Panc1 (cell line): ENCODE measurements at regions of chr16 and their contacts with region 1.

Region 1: GRCh38 chr16:22190776-22191531 is 15.1 kb upstream of the EEF2K start:
- DNase-seq: peak; percentile 99
- ATAC-seq: peak; percentile 84
- H3K4me3 ChIP-seq: peak overlapping the region; percentile 65 to 77
- H3K27ac ChIP-seq: peak overlapping the region; percentile 72
- H3K4me1 ChIP-seq: peaks cover 26% of the 10 kb centered on the region
- H3K27me3 ChIP-seq: no peaks in the 10 kb centered on the region
- CTCF ChIP-seq: no peak

Region 2: GRCh38 chr16:21950782-21951521 is 240.0 kb before region 1 on chr16:
- CTCF ChIA-PET with region 1: interaction called, 15 read pairs
- POLR2A ChIA-PET with region 1: interaction called, 3 read pairs
- in situ Hi-C with region 1: no loop called
- intact Hi-C with region 1: no loop called
- DNase-seq: peak; percentile 12
- ATAC-seq: no peak
- H3K4me3 ChIP-seq: no peak overlapping the region
- H3K27ac ChIP-seq: no peak overlapping the region
- H3K4me1 ChIP-seq: peaks cover 15% of the 10 kb centered on the region
- H3K27me3 ChIP-seq: no peaks in the 10 kb centered on the region
- CTCF ChIP-seq: peak; percentile 79

Region 3: DNA sequence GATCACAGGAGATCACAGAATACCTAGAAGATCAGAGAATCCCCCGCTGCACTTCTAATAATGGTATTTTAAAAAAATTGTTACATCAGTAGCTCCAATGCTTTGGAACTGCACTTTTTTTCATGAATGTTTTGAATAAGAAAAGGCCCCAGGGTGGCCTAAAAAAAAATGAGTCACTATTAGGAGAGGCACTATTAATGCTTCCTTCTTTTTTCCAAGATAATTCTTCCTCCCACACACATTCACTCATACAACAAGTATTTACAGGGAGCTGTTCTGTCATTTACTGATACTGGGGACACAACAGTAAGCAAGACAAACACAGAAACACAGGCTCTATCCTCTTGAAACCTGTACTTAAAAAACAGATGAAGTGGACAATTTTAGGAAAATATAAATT is 189.4 kb before region 1 on chr16:
- CTCF ChIA-PET with region 1: interaction called, 27 read pairs
- POLR2A ChIA-PET with region 1: interaction called, 5 read pairs
- in situ Hi-C with region 1: no loop called
- intact Hi-C with region 1: loop called (anchors 2 kb)
- DNase-seq: no peak
- ATAC-seq: no peak
- H3K4me3 ChIP-seq: peak overlapping the region in 1 of 2 experiments; percentile 41; a peak in 1 of 4 replicates
- H3K27ac ChIP-seq: no peak overlapping the region
- H3K4me1 ChIP-seq: no peaks in the 10 kb centered on the region; the same call in 1 of the 2 replicates
- H3K27me3 ChIP-seq: no peaks in the 10 kb centered on the region
- CTCF ChIP-seq: no peak

Region 4: DNA sequence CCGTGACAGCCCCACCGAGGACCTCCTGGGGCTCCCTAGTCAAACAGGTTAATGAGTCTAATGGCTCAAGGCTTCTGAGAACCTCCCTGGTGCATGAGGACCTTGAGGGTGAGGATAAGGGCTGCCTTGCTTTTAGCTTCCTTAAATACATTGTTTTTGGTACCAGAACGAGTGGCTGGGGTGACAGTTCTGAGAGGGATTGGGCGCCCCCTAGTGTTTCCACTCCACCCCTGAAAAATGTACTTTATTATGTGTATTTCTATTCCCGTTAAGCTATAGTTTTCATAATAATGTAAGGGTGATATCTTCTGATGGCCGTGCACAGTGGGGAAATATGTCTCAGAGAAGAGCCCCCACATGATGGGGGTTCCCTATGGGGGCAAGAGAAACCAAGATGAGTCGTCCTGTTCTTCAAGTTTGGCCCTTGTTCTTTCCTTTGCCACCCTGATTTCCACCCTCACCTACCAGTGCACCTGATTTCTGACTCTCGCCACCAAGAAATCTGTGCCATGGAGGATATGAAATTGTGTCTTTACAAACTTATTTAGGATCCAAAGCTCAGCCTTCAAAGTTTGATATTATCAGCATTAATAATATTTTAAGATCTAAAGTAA is 113.1 kb before region 1 on chr16:
- CTCF ChIA-PET with region 1: interaction called, 12 read pairs
- POLR2A ChIA-PET with region 1: no interaction called
- in situ Hi-C with region 1: loop called (anchors 25 kb)
- intact Hi-C with region 1: no loop called
- DNase-seq: no peak
- ATAC-seq: peak; percentile 85
- H3K4me3 ChIP-seq: no peak overlapping the region
- H3K27ac ChIP-seq: no peak overlapping the region
- H3K4me1 ChIP-seq: peaks cover 11% of the 10 kb centered on the region; the same call in 1 of the 2 replicates
- H3K27me3 ChIP-seq: no peaks in the 10 kb centered on the region
- CTCF ChIP-seq: peak; percentile 92

Region 5: GRCh38 chr16:22147853-22148252 is 43.1 kb before region 1 on chr16:
- CTCF ChIA-PET with region 1: no interaction called
- POLR2A ChIA-PET with region 1: no interaction called
- in situ Hi-C with region 1: no loop called
- intact Hi-C with region 1: no loop called
- DNase-seq: no peak
- ATAC-seq: no peak
- H3K4me3 ChIP-seq: no peak overlapping the region
- H3K27ac ChIP-seq: no peak overlapping the region
- H3K4me1 ChIP-seq: no peaks in the 10 kb centered on the region
- H3K27me3 ChIP-seq: 0 out of 2 replicates have a peak, but pooled peaks cover 3% of the 10 kb centered on the region
- CTCF ChIP-seq: no peak

Region 6: DNA sequence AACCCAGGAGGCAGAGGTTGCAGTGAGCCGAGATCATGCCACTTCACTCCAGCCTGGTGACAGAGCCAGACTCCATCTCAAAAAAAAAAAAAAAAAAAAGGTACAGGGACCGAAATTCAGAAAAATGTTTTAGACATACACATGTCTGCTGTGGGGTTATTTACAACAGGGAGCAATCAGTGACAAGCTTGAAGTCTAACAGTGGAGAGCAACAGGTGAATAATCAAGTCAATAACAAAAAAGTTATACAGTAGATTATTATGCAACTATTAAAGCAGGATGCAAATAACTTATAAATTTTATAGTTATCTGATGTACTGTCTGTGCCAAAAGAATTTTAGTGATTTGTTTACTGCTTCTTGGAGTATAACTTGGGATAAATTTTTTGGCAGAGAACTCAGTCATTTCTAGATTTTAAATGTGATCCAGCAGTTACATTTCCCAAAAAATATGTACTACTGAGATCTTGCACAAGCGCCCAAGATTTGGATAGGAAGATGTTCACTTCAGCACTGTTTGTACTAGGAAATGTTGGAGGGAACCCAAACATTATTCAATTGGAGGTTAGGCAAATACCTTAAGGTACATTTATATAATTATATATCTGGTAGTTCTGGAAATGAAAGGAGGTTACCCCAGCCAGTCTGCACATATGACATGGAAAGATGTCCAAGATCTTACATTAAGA is 49.2 kb after region 1 on chr16:
- CTCF ChIA-PET with region 1: no interaction called
- POLR2A ChIA-PET with region 1: interaction called, 14 read pairs
- in situ Hi-C with region 1: no loop called
- intact Hi-C with region 1: no loop called
- DNase-seq: no peak
- ATAC-seq: no peak
- H3K4me3 ChIP-seq: no peak overlapping the region
- H3K27ac ChIP-seq: no peak overlapping the region
- H3K4me1 ChIP-seq: no peaks in the 10 kb centered on the region
- H3K27me3 ChIP-seq: no peaks in the 10 kb centered on the region
- CTCF ChIP-seq: no peak

Region 7: DNA sequence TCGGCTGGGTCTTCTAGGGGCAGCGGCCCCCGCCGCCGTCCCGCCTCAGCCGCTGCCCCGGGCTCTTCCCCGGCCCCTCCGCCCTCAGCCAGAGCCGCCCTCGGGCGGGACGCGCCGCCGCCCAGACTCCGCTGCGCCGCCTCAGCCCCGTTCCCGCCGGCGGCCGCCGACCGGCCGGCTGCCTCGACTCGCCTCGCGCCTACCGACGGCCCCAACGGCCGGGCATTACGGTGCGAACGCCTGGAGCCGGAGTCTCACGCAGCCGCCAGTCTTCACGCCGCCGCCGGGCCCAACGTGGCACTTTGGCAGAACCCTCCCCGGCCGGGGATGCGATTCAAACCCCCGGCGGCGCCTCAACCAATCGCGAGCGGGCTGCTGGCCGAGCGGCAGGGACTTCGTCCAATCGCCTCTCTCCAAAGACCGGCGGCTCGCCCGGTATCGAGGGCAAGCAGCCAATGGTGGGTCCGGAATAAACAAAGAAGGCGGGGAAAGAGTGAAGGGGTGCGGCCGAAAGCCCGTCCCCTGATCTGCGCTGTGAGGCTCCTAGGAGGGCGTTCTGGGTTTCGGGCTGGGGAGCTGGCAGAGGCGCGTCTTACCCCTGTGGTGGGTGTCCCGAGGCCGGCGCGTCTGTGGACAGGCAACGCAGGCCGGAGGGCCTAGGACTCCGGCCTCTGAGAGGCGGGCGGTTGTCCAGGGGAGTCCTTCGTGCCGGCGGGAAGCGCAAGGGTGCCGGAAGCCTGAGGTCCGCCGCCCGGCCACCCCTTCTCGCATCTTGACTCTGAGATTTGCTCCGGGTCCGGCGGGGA is 183.6 kb after region 1 on chr16 and contains the start of gene CDR2:
- CTCF ChIA-PET with region 1: interaction called, 12 read pairs
- POLR2A ChIA-PET with region 1: no interaction called
- in situ Hi-C with region 1: no loop called
- intact Hi-C with region 1: no loop called
- DNase-seq: peak; percentile 73
- ATAC-seq: peak; percentile 97
- H3K4me3 ChIP-seq: peak within 1 kb of the TSS; percentile 62 to 84
- H3K27ac ChIP-seq: peak within 1 kb of the TSS; percentile 87
- H3K4me1 ChIP-seq: peaks cover 32% of the 10 kb centered on the region
- H3K27me3 ChIP-seq: no peaks in the 10 kb centered on the region
- CTCF ChIP-seq: no peak
- total RNA-seq, gene CDR2: 35.7 TPM